Adrenal gland (tissue), 19 donors: ENCODE measurements at regions of chr5 and their contacts with region 1.

Region 1: DNA sequence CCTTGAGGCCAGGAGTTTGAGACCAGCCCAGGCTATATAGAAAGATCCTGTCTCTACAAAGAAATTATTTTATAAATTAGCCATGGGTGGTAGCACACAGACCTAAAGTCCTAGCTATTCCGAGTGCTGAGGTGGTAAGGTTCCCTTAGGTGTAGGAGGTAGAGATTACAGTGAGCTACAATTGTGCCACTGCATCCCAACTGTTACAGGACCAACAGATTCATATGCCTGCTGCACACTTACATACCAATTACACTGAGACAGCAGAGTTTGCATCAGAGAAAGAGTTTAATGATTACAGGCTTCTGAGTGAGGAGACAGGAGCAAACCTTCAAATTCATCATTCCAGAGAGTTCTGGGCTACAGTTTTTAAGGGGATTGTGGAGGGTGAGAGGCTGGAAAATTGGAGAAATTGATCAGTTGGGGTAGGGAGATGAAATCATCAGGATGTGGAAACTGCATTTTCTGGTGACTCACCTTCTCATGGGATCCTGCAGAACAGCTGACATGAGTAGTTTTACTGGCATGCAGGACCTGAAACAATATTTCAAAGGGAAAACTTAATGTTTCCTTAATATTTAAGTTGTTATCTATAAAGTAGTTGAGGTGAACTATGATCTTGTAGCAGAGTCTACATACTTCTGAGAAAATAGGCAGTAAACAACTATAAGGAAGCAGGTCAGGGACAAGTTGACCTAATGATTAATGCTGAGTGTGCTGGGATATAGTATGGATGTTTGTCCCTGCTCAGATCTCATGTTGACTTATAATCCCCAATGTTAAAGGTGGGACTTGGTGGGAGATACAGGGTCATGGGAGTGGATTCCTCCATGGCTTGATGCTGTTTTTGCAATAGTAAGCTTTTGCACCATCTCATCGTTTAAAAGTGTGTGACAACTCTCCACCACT is 54.7 kb downstream of the ANXA2R start:
- DNase-seq: no peak
- H3K4me3 ChIP-seq: no peak overlapping the region
- H3K27ac ChIP-seq: no peak overlapping the region
- H3K4me1 ChIP-seq: no peaks in the 10 kb centered on the region
- H3K27me3 ChIP-seq: no peaks in the 10 kb centered on the region
- CTCF ChIP-seq: no peak
- POLR2A ChIP-seq: no peak

Region 2: GRCh38 chr5:42908509-42909488 is 76.6 kb before region 1 on chr5:
- intact Hi-C with region 1: loop called in 1 of 2 experiments (anchors 10 kb)
- DNase-seq: peak; percentile 86 to 95 (median 90)
- H3K4me3 ChIP-seq: peak overlapping the region in 2 of 4 donors; percentile 38 to 61
- H3K27ac ChIP-seq: no peak overlapping the region
- H3K4me1 ChIP-seq: peaks cover 0 to 5% of the 10 kb centered on the region in 2 donors
- H3K27me3 ChIP-seq: peaks cover 8% of the 10 kb centered on the region
- CTCF ChIP-seq: peak; percentile 70 to 93 (median 88)
- POLR2A ChIP-seq: no peak

Region 3: DNA sequence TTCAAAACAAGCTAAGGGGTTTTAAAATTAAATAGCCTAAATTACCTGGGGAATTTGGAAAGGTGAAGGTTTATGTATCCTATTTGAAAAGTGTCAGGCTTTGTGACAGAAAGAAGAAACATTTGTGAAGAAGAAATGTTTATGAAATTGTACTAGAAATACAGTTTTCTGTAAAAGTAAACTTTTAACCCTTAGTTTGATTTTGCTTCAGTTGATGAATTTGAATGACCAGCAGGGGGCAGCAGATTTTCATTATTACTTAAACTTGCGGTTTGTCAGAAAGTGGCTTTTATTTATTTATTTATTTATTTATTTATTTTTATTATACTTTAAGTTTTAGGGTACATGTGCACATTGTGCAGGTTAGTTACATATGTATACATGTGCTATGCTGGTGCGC is 675.7 kb after region 1 on chr5:
- intact Hi-C with region 1: no loop called
- DNase-seq: peak; percentile 30 to 70 (median 54)
- H3K4me3 ChIP-seq: no peak overlapping the region
- H3K27ac ChIP-seq: no peak overlapping the region
- H3K4me1 ChIP-seq: peaks cover 0 to 8% of the 10 kb centered on the region in 2 donors
- H3K27me3 ChIP-seq: no peaks in the 10 kb centered on the region
- CTCF ChIP-seq: peak; percentile 43 to 69 (median 52)
- POLR2A ChIP-seq: no peak